Thyroid gland (tissue), 4 donors: ENCODE measurements at regions of chr13 and their contacts with region 1.

Region 1: DNA sequence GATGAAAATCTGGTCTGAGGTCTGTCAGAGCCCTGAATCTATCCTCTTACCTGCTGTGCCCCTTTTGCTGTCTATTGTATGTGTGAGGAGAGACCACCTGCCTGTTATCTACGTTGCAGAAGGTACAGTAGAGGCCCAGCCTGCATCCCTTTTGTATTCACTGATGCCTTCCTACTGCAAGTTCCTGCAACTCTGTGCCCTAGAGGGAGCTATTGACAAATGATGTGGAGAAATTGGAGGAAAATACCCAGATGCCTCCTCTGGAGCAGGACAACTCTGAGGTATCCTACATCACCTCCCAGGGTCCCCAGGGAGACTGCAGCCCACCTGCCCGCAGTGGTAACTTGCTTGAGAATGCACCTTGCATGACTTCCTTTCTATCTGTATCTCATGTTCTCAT is 33.7 kb downstream of the SIAH3 start:
- DNase-seq: no peak
- H3K4me3 ChIP-seq: no peak overlapping the region
- H3K27ac ChIP-seq: no peak overlapping the region
- H3K4me1 ChIP-seq: no peaks in the 10 kb centered on the region
- H3K27me3 ChIP-seq: no peaks in the 10 kb centered on the region
- CTCF ChIP-seq: no peak
- POLR2A ChIP-seq: no peak

Region 2: DNA sequence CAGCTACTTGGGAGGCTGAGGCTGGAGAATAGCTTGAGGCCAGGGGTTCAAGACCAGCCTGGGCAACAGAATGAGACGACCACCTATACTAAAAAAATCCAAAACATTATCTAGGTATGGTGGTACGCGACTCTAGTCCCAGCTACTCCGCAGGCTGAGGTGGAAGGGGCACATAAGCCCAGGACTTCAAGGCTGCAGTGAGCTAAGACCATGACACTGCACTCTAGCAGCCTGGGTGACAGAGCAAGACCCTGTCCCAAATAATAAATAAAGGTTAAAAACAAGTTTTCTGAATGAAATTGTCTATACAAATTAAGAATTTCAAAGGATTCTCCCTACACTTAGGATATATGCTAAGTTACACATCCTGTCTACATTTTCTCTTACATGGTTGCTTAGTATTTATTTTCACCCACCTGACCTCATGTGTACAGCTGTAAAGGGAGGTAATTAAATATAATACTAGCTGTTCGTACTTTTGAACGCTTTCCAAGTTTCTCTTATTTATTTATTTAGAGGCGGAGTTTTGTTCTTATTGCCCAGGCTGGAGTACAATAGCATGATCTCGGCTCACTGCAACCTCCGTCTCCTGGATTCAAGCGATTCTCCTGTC is 401.2 kb before region 1 on chr13:
- intact Hi-C with region 1: no loop called
- DNase-seq: no peak
- H3K4me3 ChIP-seq: peak overlapping the region in 1 of 3 donors; percentile 62
- H3K27ac ChIP-seq: peak overlapping the region in 2 of 3 donors; percentile 90 to 94
- H3K4me1 ChIP-seq: peaks cover 21 to 23% of the 10 kb centered on the region in 2 donors
- H3K27me3 ChIP-seq: no peaks in the 10 kb centered on the region
- CTCF ChIP-seq: no peak
- POLR2A ChIP-seq: no peak

Region 3: DNA sequence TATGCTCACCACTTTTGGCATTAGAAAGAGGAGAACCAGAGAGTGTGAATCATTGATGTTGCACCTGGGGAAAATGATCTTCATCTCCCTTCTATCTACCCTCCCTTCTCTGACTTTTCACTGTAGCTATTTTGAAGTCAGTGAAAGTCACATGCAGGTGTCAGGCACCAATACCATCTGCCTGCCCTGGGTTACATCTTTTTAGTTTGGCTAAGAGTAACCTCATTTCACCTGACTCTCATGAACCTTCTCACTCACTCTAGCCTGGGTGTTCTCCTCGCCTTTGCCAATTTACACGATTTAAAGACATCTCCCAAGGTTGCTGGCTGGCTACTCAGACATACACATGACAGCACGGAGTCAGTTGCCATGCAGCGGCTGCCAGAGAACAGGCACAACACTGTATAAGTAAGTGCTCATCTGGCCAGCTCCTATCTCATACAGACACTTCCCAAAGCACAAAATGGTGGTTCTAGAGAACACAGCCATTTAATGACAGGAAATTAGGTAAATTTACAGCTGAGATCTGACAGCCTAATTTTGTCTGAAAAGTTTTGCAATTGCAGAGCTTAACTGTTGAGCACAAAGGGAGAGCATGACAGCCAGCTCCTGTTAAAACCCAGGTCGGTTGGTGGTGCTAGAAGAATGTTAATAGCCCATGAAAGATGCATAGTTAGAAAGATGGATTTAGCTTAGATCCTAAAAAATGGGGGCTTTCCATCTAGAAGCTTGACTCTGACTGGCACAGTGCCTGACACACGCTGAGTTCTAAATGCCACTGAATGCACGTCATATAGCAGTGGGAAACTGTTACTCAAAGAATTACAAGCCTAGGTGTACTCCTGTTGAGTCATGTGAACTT is 331.7 kb after region 1 on chr13:
- intact Hi-C with region 1: loop called (anchors 10 kb)
- DNase-seq: no peak
- H3K4me3 ChIP-seq: no peak overlapping the region
- H3K27ac ChIP-seq: no peak overlapping the region
- H3K4me1 ChIP-seq: no peaks in the 10 kb centered on the region
- H3K27me3 ChIP-seq: no peaks in the 10 kb centered on the region
- CTCF ChIP-seq: no peak
- POLR2A ChIP-seq: no peak